Transverse colon (tissue), 4 donors: ENCODE measurements at regions of chr18 and their contacts with region 1.

Region 1: DNA sequence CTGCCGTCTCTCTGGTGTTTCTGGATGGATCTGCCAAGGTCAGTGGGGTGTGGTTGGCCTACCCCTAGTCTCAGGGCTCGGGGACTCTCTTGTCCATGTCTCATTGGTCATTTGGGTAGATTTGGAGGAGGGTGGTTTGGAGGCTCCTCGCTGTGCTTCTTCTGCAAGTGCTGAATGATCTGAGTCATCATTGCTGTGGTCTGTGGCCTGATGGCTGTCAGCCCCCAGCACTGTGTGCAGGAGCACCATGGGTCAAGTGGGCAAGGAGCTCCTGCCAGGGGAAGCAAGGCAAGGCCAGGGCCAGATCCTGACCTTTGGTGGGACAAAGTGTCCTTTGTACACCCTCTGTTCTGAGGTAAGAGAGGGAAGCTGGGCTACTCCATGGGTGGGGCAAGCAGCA is 221.8 kb downstream of the FHOD3 start:
- DNase-seq: no peak
- H3K4me3 ChIP-seq: no peak overlapping the region
- H3K27ac ChIP-seq: no peak overlapping the region
- H3K4me1 ChIP-seq: no peaks in the 10 kb centered on the region
- H3K27me3 ChIP-seq: no peaks in the 10 kb centered on the region
- CTCF ChIP-seq: no peak
- EP300 ChIP-seq: no peak
- POLR2A ChIP-seq: no peak

Region 2: DNA sequence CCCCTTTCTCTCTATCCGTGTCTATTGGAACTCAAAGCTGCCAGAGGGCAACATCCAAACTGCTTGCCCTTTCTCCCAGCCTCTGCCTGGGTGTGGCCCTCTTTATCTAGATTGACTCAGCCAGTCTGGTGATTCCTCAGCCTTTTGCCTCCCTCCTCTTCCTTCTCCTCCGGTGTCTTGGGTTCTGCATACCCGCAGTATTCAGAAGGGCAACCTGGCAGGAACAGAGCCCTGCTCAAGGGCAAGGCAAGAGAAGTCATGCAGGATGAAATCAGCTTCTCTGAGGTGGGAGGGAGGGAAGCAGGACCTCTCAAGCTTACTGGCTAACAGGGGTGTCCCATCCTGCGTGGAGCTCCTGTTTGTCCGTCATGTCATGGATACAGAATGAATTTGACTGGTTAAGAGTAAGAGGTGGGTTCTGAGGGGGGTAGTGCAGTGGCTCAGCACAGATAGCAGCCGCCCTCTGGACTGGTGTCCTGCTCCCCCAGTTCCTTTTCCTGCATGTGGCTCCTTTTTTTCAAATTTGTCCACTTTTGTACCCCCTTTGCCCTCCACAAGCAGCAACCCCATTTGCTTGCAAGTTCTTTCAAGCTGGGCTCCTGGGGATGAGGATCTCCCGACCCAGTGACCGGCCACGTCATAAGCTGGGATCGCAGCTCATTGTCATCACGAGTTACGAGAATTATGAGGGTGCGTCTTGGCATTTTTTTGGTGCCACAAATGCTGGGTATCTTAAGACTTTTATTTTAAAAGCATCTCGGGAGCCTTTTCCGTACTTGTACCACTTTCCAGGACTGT is 67.7 kb before region 1 on chr18:
- in situ Hi-C with region 1: loop called in 1 of 4 experiments (anchors 10 kb)
- intact Hi-C with region 1: no loop called
- DNase-seq: no peak
- H3K4me3 ChIP-seq: no peak overlapping the region
- H3K27ac ChIP-seq: no peak overlapping the region
- H3K4me1 ChIP-seq: no peaks in the 10 kb centered on the region
- H3K27me3 ChIP-seq: no peaks in the 10 kb centered on the region
- CTCF ChIP-seq: no peak
- EP300 ChIP-seq: no peak
- POLR2A ChIP-seq: no peak